Activated CD4-positive, alpha-beta memory T cell treated with anti-CD3 and anti-CD28 coated beads, Interleukin-2, amount 10 ng/mL, durations not matched to agents 7 days and 5 days (primary cell): ENCODE measurements at regions of chr12 and their contacts with region 1.

Region 1: DNA sequence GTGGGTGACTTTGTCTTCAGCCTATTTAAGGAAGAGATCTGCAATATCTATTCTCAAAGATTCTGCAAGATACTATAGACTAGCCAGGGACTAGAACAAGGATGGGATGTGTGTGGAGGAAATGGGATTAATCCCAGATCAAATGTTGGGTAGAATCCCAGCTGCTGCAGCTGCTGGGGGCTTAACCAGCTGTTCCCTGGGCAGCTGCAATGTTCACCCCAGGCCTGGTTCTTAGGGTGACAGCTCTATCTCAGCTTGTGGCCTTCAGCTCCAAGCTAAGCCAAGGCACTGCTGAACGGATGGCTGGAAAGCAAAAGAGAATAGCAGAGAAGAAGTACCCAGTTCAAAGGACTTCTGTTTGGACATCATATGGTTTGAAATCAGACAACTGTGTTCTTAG is 10.0 kb upstream of the RHEBL1 start:
- DNase-seq: no peak
- H3K4me3 Mint-ChIP-seq: no peak overlapping the region
- H3K27ac Mint-ChIP-seq: no peak overlapping the region
- H3K4me1 Mint-ChIP-seq: peaks cover 2% of the 10 kb centered on the region
- H3K27me3 Mint-ChIP-seq: peaks cover 3% of the 10 kb centered on the region

Region 2: DNA sequence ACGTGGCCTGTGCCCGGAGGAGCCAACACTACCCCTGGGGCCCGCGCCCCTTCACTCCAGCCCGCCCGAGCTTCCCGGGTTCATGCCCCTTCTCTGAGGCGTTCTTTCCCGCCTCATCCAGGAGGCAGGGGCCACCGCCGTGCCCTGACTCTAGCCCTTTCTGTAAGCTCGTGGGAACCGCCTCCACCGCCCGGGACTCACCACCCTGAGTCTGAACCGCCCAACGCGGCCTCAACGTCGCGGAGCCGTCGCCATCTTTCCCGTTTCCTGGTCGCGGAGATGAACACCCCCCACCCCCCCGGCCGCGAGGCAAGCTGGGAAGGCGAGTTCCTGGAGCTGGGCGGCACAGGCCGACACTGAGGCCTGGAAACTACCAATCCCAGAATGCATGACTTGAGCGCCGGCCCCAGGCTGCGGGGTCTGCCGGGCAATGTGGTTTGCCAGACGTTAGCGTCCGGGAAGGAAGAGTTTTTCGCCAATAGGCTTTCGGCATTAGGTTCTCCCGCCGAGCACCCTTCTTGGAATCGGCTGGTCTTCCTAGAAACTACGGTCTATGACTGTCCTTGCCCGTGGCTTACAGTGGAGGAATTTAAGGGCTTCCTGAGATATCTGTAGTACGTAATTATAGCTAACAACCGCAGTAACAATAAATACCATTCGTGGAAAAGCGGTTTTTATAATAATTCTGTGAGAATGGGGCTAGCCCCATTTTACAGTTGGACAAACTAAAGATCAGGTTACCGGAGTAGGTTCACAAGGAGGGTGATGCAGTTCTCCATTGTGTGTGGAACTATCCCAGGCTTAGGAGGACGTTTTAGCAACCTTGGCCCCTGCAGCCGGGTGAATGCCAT is 227.7 kb before region 1 on chr12 and contains the start of gene DDX23:
- CTCF ChIA-PET with region 1: no interaction called
- POLR2A ChIA-PET with region 1: no interaction called
- DNase-seq: peak; percentile 95
- H3K4me3 Mint-ChIP-seq: peak within 1 kb of the TSS; percentile 98
- H3K27ac Mint-ChIP-seq: peak within 1 kb of the TSS; percentile 98
- H3K4me1 Mint-ChIP-seq: peaks cover 36% of the 10 kb centered on the region
- H3K27me3 Mint-ChIP-seq: no peaks in the 10 kb centered on the region
- total RNA-seq, gene DDX23: 117 to 127 TPM

Region 3: DNA sequence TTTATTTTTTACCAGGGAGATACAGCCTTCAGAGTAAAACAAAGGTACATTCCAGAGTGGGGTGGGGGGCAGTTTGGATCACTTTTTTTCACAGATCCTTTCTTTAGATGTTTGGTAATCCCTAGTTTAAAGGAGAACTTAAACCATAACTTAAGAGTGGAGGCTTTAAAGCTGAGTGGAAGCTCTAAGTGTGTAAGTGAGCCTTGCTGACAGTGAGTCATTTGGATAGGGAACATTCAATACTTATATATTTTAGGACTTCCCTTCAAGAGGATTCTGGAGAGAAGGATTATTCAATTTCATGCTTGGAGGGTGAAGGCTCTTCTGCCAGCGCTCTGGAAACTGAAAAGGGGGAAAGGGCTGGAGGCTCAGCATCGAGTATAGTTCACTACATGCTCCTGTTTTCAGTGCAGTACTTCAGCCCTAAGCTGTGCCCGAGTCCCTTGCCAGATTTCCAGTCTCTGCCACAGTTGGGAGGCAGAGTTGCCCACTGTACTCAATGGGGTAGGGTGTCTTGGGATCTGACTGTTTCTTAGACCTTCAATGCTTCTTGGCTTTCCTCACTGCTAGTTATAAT is 69.6 kb before region 1 on chr12:
- CTCF ChIA-PET with region 1: no interaction called
- POLR2A ChIA-PET with region 1: no interaction called
- DNase-seq: no peak
- H3K4me3 Mint-ChIP-seq: no peak overlapping the region
- H3K27ac Mint-ChIP-seq: no peak overlapping the region
- H3K4me1 Mint-ChIP-seq: peaks cover 8% of the 10 kb centered on the region
- H3K27me3 Mint-ChIP-seq: no peaks in the 10 kb centered on the region

Region 4: GRCh38 chr12:49055981-49056754 is 23.6 kb before region 1 on chr12:
- CTCF ChIA-PET with region 1: no interaction called
- POLR2A ChIA-PET with region 1: no interaction called
- DNase-seq: peak; percentile 64
- H3K4me3 Mint-ChIP-seq: peak overlapping the region; percentile 95
- H3K27ac Mint-ChIP-seq: peak overlapping the region; percentile 54
- H3K4me1 Mint-ChIP-seq: peaks cover 47% of the 10 kb centered on the region
- H3K27me3 Mint-ChIP-seq: no peaks in the 10 kb centered on the region

Region 5: GRCh38 chr12:49069507-49070346 is 10.1 kb before region 1 on chr12 and contains the start of gene RHEBL1:
- CTCF ChIA-PET with region 1: interaction called, 116 read pairs
- POLR2A ChIA-PET with region 1: interaction called, 20 read pairs
- DNase-seq: peak; percentile 100
- H3K4me3 Mint-ChIP-seq: peak within 1 kb of the TSS; percentile 97
- H3K27ac Mint-ChIP-seq: peak within 1 kb of the TSS; percentile 86
- H3K4me1 Mint-ChIP-seq: peaks cover 33% of the 10 kb centered on the region
- H3K27me3 Mint-ChIP-seq: no peaks in the 10 kb centered on the region
- total RNA-seq, gene RHEBL1: 14.8 to 15.8 TPM

Region 6: GRCh38 chr12:49170924-49171323 is 91.1 kb after region 1 on chr12:
- CTCF ChIA-PET with region 1: no interaction called
- POLR2A ChIA-PET with region 1: no interaction called
- DNase-seq: no peak
- H3K4me3 Mint-ChIP-seq: no peak overlapping the region
- H3K27ac Mint-ChIP-seq: no peak overlapping the region
- H3K4me1 Mint-ChIP-seq: no peaks in the 10 kb centered on the region
- H3K27me3 Mint-ChIP-seq: peaks cover 3% of the 10 kb centered on the region